ENCODE measurements at regions of chr5 and their contacts with region 1.

Region 1: DNA sequence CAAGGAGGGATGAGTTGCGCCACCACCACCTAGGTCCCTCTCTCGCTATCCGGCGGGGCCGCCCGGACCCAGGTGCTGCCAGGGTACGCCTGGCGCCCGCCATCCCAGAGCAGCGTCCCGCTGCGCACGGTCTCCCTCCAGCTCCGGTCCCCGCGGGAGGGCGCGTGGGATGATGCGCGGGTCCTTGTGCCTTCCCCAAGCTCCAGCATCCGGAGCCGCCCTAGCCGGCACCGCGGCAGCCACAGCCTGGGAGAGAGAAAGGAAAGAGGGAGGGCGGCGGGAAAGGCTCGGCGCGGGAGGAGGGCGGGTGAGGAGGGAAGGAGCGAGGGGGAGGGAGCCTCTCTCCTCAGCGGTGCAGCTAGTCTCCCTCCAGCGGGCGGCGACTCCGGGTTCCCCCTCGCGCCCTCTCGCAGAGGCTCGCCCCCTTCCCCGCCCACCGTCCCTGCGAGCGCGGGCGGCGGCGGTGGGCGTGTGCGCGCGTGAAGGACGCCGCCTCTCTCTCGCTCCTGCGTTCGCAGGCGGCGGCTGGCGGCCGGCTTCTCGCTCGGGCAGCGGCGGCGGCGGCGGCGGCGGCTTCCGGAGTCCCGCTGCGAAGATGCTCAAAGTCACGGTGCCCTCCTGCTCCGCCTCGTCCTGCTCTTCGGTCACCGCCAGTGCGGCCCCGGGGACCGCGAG is at the start of gene CAMK4:
- DNase-seq: peak; percentile 70
- H3K4me3 Mint-ChIP-seq: peak within 1 kb of the TSS; percentile 98
- H3K27ac Mint-ChIP-seq: peak within 1 kb of the TSS; percentile 95
- H3K4me1 Mint-ChIP-seq: peaks cover 54% of the 10 kb centered on the region
- H3K27me3 Mint-ChIP-seq: peaks cover 2% of the 10 kb centered on the region
- total RNA-seq, gene CAMK4: 51.8 and 56.9 TPM in 2 replicates

Region 2: DNA sequence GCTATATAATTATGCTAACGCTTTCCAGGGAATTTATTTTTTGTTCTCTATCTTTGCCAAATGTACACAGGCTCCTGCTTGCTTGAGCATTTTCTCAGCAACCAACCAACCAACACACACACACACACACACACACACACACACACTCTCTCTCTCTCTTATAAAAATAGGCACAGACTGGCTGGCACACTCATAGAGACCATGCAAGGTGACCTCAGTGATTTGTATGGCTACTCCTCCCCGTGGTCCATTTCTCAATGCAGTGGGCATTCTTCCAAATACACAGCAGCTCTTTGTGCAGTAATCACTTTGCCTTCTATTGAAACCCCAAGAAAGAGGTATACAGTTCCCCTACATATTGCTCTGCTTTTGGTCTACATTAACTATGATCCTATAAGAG is 1118.3 kb before region 1 on chr5:
- intact Hi-C with region 1: no loop called
- DNase-seq: no peak
- H3K4me3 Mint-ChIP-seq: no peak overlapping the region
- H3K27ac Mint-ChIP-seq: no peak overlapping the region
- H3K4me1 Mint-ChIP-seq: peaks cover 49% of the 10 kb centered on the region
- H3K27me3 Mint-ChIP-seq: no peaks in the 10 kb centered on the region

Region 3: GRCh38 chr5:111158105-111158744 is 65.8 kb before region 1 on chr5:
- intact Hi-C with region 1: loop called (anchors 1 kb)
- DNase-seq: peak; percentile 62
- H3K4me3 Mint-ChIP-seq: no peak overlapping the region
- H3K27ac Mint-ChIP-seq: no peak overlapping the region
- H3K4me1 Mint-ChIP-seq: peaks cover 4% of the 10 kb centered on the region
- H3K27me3 Mint-ChIP-seq: no peaks in the 10 kb centered on the region

Region 4: DNA sequence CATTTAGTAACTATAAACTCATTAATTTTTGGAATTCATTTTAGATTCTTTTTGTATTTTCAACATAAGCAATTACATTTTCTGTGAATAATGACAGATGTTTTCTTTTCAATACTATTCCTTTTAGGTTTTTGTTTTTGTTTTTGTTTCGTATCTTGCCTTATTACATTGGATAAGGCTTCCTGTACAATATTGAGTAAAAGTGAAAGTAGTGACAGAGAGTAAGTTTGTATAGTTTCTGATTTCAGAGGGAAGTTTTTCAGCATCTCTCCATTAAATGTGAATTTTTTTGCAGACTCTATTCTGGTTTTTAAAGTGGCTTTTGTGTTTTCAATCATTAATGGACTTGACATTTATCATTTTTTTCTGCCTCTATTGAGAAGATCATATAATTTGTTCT is 12.7 kb before region 1 on chr5:
- intact Hi-C with region 1: loop called (anchors 1 kb)
- DNase-seq: no peak
- H3K4me3 Mint-ChIP-seq: no peak overlapping the region
- H3K27ac Mint-ChIP-seq: peak overlapping the region; percentile 27
- H3K4me1 Mint-ChIP-seq: peaks cover 36% of the 10 kb centered on the region
- H3K27me3 Mint-ChIP-seq: peaks cover 2% of the 10 kb centered on the region

Region 5: GRCh38 chr5:111237470-111237869 is 13.4 kb after region 1 on chr5:
- intact Hi-C with region 1: loop called (anchors 1 kb)
- DNase-seq: no peak
- H3K4me3 Mint-ChIP-seq: peak overlapping the region; percentile 70
- H3K27ac Mint-ChIP-seq: peak overlapping the region; percentile 91
- H3K4me1 Mint-ChIP-seq: peaks cover 85% of the 10 kb centered on the region
- H3K27me3 Mint-ChIP-seq: no peaks in the 10 kb centered on the region

Region 6: DNA sequence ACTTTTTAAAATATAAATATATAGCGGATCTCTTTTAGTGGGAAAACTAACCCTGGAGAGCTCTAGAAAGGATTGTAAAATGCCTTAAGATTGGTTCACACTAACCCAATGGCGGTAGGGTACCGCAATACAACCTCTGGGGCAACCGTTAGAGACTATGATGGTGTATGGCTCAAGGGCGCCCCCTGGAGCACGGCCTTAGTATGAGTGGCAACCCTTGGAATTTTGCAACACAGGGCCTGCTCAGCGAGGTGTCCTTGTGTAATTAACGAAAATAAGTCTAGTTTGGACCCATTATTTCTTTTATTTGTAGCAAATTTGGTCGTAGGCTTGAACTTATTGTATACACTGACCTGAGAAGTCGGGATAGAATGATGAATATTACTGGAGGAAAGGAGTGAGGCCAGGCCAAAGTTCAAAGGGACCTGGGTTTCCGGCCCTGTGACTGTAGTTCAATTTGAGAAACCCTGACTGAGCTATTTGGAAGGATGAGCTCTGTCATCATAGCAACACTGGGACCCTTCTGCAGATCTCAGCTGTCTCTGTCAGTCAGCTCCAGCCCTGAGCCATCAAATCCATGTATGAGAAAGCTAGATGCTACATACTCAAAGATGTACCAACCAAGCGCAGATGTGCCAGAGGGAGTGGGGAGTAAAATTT is 54.9 kb after region 1 on chr5:
- intact Hi-C with region 1: loop called (anchors 1 kb)
- DNase-seq: peak; percentile 75
- H3K4me3 Mint-ChIP-seq: no peak overlapping the region
- H3K27ac Mint-ChIP-seq: no peak overlapping the region
- H3K4me1 Mint-ChIP-seq: peaks cover 27% of the 10 kb centered on the region
- H3K27me3 Mint-ChIP-seq: no peaks in the 10 kb centered on the region

Region 7: DNA sequence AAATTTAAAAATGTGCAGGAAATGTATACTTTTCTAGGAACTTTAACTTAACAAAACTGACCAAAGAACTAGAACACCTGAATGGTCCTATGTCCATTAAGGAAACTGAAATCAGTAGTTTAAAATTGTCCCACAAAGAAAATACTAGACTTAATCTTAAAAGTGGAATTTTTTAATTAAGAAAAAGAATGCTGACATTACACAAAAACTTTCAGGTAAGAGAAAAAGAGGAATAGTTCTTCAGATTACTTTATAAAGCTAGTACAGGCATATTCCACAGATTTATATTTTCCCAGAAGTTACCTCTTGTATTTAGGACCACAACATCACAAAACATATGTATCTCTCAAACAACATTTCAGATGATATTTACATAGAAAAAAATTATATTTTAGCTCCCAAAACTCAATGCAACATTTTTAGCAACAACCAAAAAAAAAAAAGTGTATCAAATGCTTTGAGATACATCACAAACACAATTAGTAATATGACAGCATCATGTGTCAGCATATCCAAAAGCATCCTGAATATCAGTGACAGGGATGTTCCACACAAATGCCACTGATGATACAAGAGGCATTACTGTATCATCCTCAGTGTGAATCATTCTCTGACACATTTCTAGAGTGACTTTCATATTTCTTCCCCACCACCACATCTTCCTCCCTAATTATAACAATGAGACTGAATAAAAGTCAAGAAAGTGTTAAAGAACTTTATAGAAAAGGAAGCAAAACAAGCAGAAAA is 931.1 kb after region 1 on chr5:
- intact Hi-C with region 1: loop called (anchors 10 kb)
- DNase-seq: no peak
- H3K4me3 Mint-ChIP-seq: no peak overlapping the region
- H3K27ac Mint-ChIP-seq: peak overlapping the region; percentile 31
- H3K4me1 Mint-ChIP-seq: peaks cover 6% of the 10 kb centered on the region
- H3K27me3 Mint-ChIP-seq: peaks cover 11% of the 10 kb centered on the region